ENCODE measurements at regions of chr2 and their contacts with region 1.

Region 1: DNA sequence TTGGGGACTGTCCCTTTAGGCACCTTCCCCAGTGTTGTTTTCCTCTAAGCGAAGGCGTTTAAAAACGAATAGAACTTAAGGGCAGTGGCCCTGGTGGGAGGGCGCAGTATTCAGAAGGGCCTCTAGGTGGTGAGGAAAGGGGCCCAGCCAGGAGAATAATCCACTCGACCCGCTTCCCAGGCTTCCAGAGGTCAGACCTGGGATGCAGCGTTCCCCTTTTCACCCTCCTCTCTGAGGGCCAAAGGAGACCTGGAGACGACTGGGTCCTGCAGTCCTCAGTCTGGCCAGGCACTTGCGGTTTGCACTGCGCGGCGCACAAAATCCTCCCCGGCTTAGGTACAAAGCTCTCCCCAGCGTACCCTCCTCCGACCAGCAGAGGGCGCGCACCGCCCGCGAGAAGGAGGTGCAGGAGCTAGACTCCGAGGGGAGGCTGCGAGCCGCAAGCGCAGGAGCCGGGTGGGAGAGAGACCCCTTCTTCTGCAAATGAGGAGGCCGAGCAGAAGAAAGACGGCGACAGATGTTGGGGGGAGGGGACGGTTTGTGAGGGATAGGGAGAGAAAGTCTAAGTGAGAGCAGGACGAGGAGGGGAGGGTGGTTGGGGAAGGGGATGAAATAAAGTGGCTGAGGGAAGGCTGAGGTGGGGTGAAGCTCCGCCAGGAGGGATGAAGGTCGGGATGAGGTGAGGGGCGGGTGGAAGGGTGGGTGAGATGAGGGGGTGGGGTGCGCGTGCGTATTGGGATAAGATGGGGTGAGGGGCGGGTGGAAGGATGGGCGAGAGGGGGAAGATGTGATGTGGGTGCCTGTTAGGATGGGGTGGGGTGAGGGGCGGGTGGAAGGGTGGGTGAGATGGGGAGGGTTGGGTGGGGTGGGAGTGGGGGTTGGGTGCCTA is 4.9 kb downstream of the FEV start:
- DNase-seq: peak; percentile 68
- ATAC-seq: peak; percentile 98
- H3K4me3 ChIP-seq: peak overlapping the region; percentile 38 to 54
- H3K27ac ChIP-seq: no peak overlapping the region
- H3K4me1 ChIP-seq: peaks cover 0 to 10% of the 10 kb centered on the region in 2 experiments; a peak in 1 of 4 replicates
- H3K27me3 ChIP-seq: no peaks in the 10 kb centered on the region
- CTCF ChIP-seq: peak; percentile 88 to 99 (median 99)
- POLR2A ChIP-seq: no peak
- RAD21 ChIP-seq: peak; percentile 91

Region 2: DNA sequence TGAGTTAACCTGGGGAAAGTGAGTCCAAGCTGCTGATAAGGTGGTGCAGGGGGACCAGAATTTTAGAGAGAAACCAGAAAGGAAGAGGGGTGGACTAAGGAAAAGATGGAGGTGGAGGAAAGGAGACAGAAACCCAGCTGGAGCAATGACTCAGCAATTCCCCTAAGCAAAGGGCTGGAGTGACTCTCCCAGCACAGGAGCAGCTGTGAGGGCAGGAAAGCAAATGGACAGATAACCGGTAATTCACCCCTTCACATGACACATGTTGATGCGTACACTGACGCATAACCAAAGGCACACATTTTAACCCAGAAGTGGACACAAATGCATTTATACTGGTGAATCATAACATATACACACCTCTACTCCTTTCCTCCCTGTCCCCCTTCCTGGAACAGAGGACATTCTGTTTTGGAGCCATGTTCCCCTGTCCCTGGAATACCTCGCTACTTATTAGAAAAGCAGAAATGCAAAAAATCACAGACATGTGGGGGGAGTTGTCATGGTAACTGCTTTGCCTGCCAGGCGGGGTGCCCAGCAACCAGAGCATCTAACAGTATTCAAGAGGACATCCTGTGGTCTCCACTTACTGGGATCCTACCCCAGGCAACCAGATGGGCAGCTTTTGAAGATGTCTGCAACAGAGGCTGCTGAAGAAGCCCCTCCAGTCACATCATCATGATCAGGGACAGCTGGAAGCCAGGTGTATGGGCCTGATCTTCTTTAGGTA is 15.9 kb before region 1 on chr2:
- CTCF ChIA-PET with region 1: interaction called, 11 read pairs
- POLR2A ChIA-PET with region 1: no interaction called
- RAD21 ChIA-PET with region 1: interaction called in 1 of 2 experiments, 3 read pairs
- intact Hi-C with region 1: no loop called
- DNase-seq: no peak
- ATAC-seq: no peak
- H3K4me3 ChIP-seq: no peak overlapping the region
- H3K27ac ChIP-seq: no peak overlapping the region
- H3K4me1 ChIP-seq: peaks cover 0 to 26% of the 10 kb centered on the region in 2 experiments; a peak in 2 of 4 replicates
- H3K27me3 ChIP-seq: peaks cover 11% of the 10 kb centered on the region; the same call in 1 of the 2 replicates
- CTCF ChIP-seq: no peak
- POLR2A ChIP-seq: no peak
- RAD21 ChIP-seq: no peak

Region 3: DNA sequence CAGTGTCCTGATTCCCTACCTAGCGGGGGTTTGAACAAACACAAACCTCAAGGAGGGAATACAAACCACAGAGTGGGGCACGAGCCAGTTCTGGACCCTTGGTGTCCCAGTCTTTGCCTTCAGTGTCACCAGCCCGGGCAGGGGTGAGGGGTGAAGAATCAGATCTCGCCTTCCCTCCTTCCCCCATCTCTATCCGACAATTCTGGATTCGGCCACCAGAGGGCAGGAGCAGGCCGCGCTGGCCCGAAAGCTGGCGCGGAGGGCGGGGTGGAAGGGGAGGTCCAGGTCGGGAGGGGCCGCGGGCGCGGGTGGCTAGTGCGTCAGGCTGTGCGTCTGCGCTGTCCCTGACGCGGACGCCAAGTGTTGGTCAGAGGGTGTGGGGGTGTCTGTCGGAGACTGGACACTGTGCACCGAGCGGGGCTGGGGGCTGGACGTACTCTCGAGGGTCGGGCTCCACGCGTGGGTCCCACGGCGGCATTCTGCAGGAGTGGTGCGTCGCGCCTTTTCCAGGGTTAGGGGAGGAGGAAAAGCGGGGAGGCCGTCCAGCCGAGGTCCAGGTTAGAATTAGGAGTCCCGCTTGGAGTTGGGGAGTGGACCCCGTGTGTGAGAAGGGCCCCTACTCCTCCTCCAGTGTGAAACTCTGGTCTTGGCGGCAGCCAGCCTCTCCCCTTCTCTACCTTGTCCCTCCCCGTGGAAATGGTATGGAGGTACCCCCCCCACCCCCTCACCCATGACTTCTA is 16.1 kb after region 1 on chr2:
- CTCF ChIA-PET with region 1: interaction called, 42 read pairs
- POLR2A ChIA-PET with region 1: no interaction called
- RAD21 ChIA-PET with region 1: no interaction called
- intact Hi-C with region 1: no loop called
- DNase-seq: peak; percentile 67
- ATAC-seq: peak; percentile 94
- H3K4me3 ChIP-seq: peak overlapping the region; percentile 45 to 57
- H3K27ac ChIP-seq: no peak overlapping the region; the same call in 1 of the 2 replicates
- H3K4me1 ChIP-seq: peaks cover 0 to 23% of the 10 kb centered on the region in 2 experiments; a peak in 3 of 4 replicates
- H3K27me3 ChIP-seq: no peaks in the 10 kb centered on the region
- CTCF ChIP-seq: peak in 2 of 3 experiments; percentile 89 to 91; a peak in 4 of 6 replicates
- POLR2A ChIP-seq: no peak
- RAD21 ChIP-seq: no peak

Region 4: GRCh38 chr2:219002395-219003266 is 22.5 kb after region 1 on chr2:
- CTCF ChIA-PET with region 1: interaction called, 42 read pairs
- POLR2A ChIA-PET with region 1: interaction called, 4 read pairs
- RAD21 ChIA-PET with region 1: interaction called in 1 of 2 experiments, 5 read pairs
- intact Hi-C with region 1: no loop called
- DNase-seq: peak; percentile 60
- ATAC-seq: peak; percentile 83
- H3K4me3 ChIP-seq: peak overlapping the region; percentile 56 to 68
- H3K27ac ChIP-seq: peak overlapping the region; percentile 51
- H3K4me1 ChIP-seq: peaks cover 9 to 35% of the 10 kb centered on the region in 2 experiments; a peak in 3 of 4 replicates
- H3K27me3 ChIP-seq: no peaks in the 10 kb centered on the region
- CTCF ChIP-seq: peak in 2 of 3 experiments; percentile 67 to 71; a peak in 4 of 6 replicates
- POLR2A ChIP-seq: no peak
- RAD21 ChIP-seq: no peak

Region 5: GRCh38 chr2:219041252-219041651 is 61.2 kb after region 1 on chr2 and contains the start of gene CFAP65:
- CTCF ChIA-PET with region 1: no interaction called
- POLR2A ChIA-PET with region 1: no interaction called
- RAD21 ChIA-PET with region 1: no interaction called
- intact Hi-C with region 1: no loop called
- DNase-seq: peak; percentile 34
- ATAC-seq: peak; percentile 79
- H3K4me3 ChIP-seq: peak within 1 kb of the TSS; percentile 43 to 47
- H3K27ac ChIP-seq: no peak within 1 kb of the TSS
- H3K4me1 ChIP-seq: no peaks in the 10 kb centered on the region
- H3K27me3 ChIP-seq: peaks cover 24% of the 10 kb centered on the region
- CTCF ChIP-seq: no peak
- POLR2A ChIP-seq: no peak
- RAD21 ChIP-seq: no peak
- total RNA-seq, gene CFAP65: 0.52 TPM